ENCODE measurements at regions of chr20 and their contacts with region 1.

Region 1: DNA sequence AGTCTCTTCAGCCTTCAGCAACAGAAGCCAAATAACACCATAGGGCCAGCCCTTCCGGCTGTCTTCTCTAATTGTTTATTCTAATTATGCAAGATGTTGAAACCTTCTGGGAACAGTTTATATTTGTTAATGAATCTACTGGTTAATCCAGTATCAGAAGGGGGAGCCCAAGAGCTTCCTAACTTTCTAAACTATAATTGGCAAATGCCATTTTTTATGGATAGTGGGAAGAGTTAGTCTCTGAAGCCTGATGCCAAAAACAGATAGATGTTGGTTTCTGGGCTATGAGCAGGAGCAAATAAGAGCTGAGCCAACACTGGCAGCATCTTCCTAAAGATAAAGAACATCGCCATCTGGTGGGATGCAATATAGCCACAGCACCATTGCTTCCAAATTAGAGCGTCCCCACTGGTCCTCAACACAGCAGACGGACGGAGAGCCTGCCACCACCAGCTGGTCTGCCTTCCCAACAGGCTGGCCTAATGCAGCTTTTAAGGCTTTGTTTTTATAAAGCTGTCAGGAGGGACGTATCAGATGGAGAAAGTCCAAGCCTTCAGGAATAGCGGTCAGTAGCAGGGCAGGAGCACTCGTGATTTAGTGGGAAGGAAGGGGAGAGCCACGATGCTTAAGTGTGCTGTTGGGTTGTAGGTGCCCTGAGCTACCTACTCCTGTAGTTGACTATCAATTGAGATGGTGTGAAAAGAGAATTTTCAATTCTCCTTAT is 118.8 kb downstream of the RALGAPA2 start:
- DNase-seq: peak; percentile 51 to 61
- ATAC-seq: peak; percentile 93 to 94
- H3K4me3 ChIP-seq: no peak overlapping the region
- H3K27ac ChIP-seq: no peak overlapping the region
- H3K4me1 ChIP-seq: no peaks in the 10 kb centered on the region
- CTCF ChIP-seq: peak; percentile 71
- EP300 ChIP-seq: no peak
- POLR2A ChIP-seq: no peak
- RAD21 ChIP-seq: peak; percentile 32 to 39; a peak in 4 of 5 replicates

Region 2: GRCh38 chr20:20568604-20569205 is 24.9 kb before region 1 on chr20:
- CTCF ChIA-PET with region 1: interaction called, 10 read pairs
- POLR2A ChIA-PET with region 1: no interaction called
- DNase-seq: peak; percentile 18 to 59
- ATAC-seq: peak in 1 of 2 experiments; percentile 60; a peak in 2 of 6 replicates
- H3K4me3 ChIP-seq: no peak overlapping the region
- H3K27ac ChIP-seq: no peak overlapping the region
- H3K4me1 ChIP-seq: no peaks in the 10 kb centered on the region
- CTCF ChIP-seq: peak; percentile 96
- EP300 ChIP-seq: no peak
- POLR2A ChIP-seq: no peak
- RAD21 ChIP-seq: peak; percentile 91 to 94

Region 3: GRCh38 chr20:20582734-20583133 is 10.9 kb before region 1 on chr20:
- CTCF ChIA-PET with region 1: interaction called, 29 read pairs
- POLR2A ChIA-PET with region 1: no interaction called
- DNase-seq: no peak
- ATAC-seq: no peak
- H3K4me3 ChIP-seq: no peak overlapping the region
- H3K27ac ChIP-seq: no peak overlapping the region
- H3K4me1 ChIP-seq: no peaks in the 10 kb centered on the region
- CTCF ChIP-seq: no peak
- EP300 ChIP-seq: no peak
- POLR2A ChIP-seq: no peak
- RAD21 ChIP-seq: no peak

Measured in A549 (cell line).